ENCODE measurements at regions of chr2 and their contacts with region 1.

Region 1: DNA sequence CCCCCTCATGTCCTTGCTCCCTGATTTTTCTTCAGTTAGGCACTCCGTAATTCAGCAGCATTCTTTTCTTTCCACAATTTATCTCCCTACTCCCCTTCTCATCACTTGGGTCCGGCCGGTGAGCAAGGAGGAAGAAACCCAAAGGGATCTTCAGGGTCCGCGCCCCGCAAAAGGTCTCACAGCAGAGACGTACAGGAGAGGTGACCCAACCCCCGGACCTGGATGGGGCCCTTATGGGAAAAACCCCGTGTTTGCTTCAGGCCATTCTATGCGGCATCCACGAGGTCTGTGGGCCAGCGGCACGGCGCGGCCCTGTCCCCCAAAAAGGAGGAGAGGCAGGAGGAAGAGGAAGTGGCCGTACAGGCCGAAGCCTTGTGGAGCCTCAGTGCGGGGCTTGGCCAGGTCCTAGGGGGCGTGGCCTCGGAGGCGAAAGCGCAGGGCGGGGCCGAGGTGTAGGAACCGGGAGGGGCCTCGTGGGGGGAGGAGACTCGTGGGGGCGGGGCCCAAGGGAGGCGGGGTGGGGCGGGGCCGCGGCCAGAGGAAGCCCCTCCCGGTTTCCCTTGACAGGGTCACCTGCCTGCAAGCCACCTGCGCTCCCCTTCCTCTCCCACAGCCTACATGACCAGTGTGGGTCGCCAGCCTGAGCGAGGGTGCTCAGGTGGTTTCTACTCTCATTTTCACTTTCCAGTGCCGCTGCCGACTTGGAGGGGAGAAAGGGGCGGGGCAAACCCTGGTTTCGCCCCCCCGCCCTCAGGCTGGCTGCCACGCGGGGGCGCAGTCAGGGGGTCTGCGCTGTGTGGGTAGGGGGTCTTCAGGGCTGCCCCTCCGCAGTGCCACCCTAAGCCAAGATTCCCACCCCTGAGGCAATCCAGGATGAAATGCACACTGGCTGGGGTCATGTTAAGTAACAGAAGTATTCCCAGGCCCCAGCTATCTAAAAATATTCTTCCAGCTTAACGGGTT is 156.4 kb upstream of the XPO1 start:
- DNase-seq: peak; percentile 86
- ATAC-seq: peak; percentile 98
- H3K4me3 Mint-ChIP-seq: peak overlapping the region; percentile 94
- H3K27ac Mint-ChIP-seq: peak overlapping the region; percentile 92
- H3K4me1 Mint-ChIP-seq: peaks cover 11% of the 10 kb centered on the region
- H3K27me3 Mint-ChIP-seq: no peaks in the 10 kb centered on the region
- CTCF ChIP-seq: no peak

Region 2: GRCh38 chr2:61549546-61549945 is 145.0 kb before region 1 on chr2:
- CTCF ChIA-PET with region 1: no interaction called
- POLR2A ChIA-PET with region 1: interaction called, 10 read pairs
- intact Hi-C with region 1: no loop called
- DNase-seq: no peak
- ATAC-seq: no peak
- H3K4me3 Mint-ChIP-seq: no peak overlapping the region
- H3K27ac Mint-ChIP-seq: no peak overlapping the region
- H3K4me1 Mint-ChIP-seq: no peaks in the 10 kb centered on the region
- H3K27me3 Mint-ChIP-seq: no peaks in the 10 kb centered on the region
- CTCF ChIP-seq: no peak

Region 3: GRCh38 chr2:61764035-61764800 is 69.6 kb after region 1 on chr2:
- CTCF ChIA-PET with region 1: no interaction called
- POLR2A ChIA-PET with region 1: interaction called, 3 read pairs
- intact Hi-C with region 1: loop called (anchors 1 kb)
- DNase-seq: peak; percentile 88
- ATAC-seq: peak; percentile 98
- H3K4me3 Mint-ChIP-seq: peak overlapping the region; percentile 95
- H3K27ac Mint-ChIP-seq: peak overlapping the region; percentile 94
- H3K4me1 Mint-ChIP-seq: peaks cover 16% of the 10 kb centered on the region
- H3K27me3 Mint-ChIP-seq: no peaks in the 10 kb centered on the region
- CTCF ChIP-seq: no peak

Region 4: GRCh38 chr2:61854474-61855182 is 160.0 kb after region 1 on chr2:
- CTCF ChIA-PET with region 1: interaction called, 3 read pairs
- POLR2A ChIA-PET with region 1: no interaction called
- intact Hi-C with region 1: loop called (anchors 1 kb)
- DNase-seq: peak; percentile 69
- ATAC-seq: peak; percentile 86
- H3K4me3 Mint-ChIP-seq: peak overlapping the region; percentile 94
- H3K27ac Mint-ChIP-seq: peak overlapping the region; percentile 95
- H3K4me1 Mint-ChIP-seq: peaks cover 19% of the 10 kb centered on the region
- H3K27me3 Mint-ChIP-seq: no peaks in the 10 kb centered on the region
- CTCF ChIP-seq: no peak